ENCODE measurements at regions of chr15 and their contacts with region 1.

Region 1: GRCh38 chr15:39171944-39172368 is 408.9 kb upstream of the THBS1 start:
- DNase-seq: peak; percentile 76
- ATAC-seq: peak; percentile 87

Region 2: DNA sequence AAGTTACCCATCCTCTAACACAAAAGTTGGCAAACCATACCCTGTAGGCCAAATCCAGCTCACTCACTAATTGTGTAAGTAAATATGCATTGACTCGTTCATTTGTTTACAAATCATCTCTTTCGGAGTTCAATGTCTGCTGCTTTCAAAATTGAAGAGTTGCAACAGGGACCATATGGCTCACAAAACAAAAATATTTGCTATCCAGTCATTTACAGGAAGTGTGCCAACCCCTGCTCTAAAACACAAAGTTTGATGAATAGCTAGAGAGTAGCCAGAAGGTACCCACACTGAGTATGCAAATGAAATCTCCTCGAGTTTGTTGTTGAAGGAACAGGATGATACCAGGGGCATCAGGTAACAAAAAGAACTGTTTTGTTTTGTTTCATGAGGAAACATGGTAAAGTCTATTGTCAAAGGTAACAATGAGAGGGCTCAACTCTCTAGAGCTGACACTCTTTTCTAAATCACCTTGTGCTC is 172.7 kb after region 1 on chr15:
- intact Hi-C with region 1: no loop called
- DNase-seq: no peak
- ATAC-seq: no peak

Region 3: GRCh38 chr15:39580117-39580484 is 408.1 kb after region 1 on chr15:
- intact Hi-C with region 1: loop called (anchors 5 kb)
- DNase-seq: peak; percentile 98
- ATAC-seq: peak; percentile 79

Region 4: GRCh38 chr15:40536501-40536900 is 1364.5 kb after region 1 on chr15:
- intact Hi-C with region 1: no loop called
- DNase-seq: no peak
- ATAC-seq: no peak

Measured in sciatic nerve (tissue), 2 donors.